Natural killer cell (primary cell): ENCODE measurements at regions of chr12 and their contacts with region 1.

Region 1: DNA sequence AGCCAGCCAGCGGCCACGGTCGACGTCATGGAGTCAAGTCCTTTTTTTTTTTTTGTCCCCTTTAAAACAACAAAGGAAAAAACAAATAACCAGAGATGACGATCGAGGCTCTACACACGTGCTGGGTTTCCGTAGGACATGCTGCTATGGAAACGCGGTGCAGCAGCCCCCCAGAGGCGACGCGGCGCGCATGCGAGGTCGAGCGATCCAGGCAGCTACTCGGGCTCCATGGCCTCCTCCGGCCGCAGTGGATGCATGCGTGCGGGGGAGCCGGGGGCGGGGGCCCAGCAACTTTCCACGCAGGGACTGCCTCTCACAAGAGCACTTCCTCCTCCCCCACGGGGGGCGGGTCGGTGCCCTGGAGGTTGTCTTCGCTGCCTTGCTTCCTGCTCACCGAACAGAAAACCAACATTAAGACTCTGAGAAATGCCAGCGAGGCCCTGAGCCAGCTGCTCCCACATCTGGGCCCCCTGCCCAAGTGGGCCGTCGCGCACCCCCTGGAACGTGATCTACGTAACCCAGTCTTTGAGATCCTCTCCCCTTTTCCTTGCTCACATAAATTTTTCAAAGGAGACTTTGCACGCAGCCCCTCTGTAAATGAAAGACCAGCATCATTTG is 30.7 kb downstream of the P2RX4 start:
- DNase-seq: peak; percentile 90 to 97
- ATAC-seq: peak; percentile 90 to 95 (median 92)
- H3K4me3 ChIP-seq: peak overlapping the region; percentile 32
- H3K4me3 Mint-ChIP-seq: peak overlapping the region; percentile 86
- H3K27ac ChIP-seq: peak overlapping the region; percentile 84
- H3K27ac Mint-ChIP-seq: peak overlapping the region; percentile 97 to 98
- H3K4me1 ChIP-seq: peaks cover 37% of the 10 kb centered on the region
- H3K4me1 Mint-ChIP-seq: peaks cover 29 to 30% of the 10 kb centered on the region in 2 donors
- H3K27me3 ChIP-seq: no peaks in the 10 kb centered on the region
- H3K27me3 Mint-ChIP-seq: no peaks in the 10 kb centered on the region
- CTCF ChIP-seq: no peak

Region 2: GRCh38 chr12:121128970-121129810 is 111.4 kb before region 1 on chr12:
- intact Hi-C with region 1: loop called (anchors 1 kb)
- DNase-seq: peak; percentile 75 to 89
- ATAC-seq: peak; percentile 80 to 90 (median 85)
- H3K4me3 ChIP-seq: peak overlapping the region; percentile 19
- H3K4me3 Mint-ChIP-seq: peak overlapping the region; percentile 92
- H3K27ac ChIP-seq: peak overlapping the region; percentile 91
- H3K27ac Mint-ChIP-seq: peak overlapping the region; percentile 97 to 98
- H3K4me1 ChIP-seq: peaks cover 47% of the 10 kb centered on the region
- H3K4me1 Mint-ChIP-seq: peaks cover 66 to 69% of the 10 kb centered on the region in 2 donors
- H3K27me3 ChIP-seq: no peaks in the 10 kb centered on the region
- H3K27me3 Mint-ChIP-seq: no peaks in the 10 kb centered on the region
- CTCF ChIP-seq: no peak

Region 3: DNA sequence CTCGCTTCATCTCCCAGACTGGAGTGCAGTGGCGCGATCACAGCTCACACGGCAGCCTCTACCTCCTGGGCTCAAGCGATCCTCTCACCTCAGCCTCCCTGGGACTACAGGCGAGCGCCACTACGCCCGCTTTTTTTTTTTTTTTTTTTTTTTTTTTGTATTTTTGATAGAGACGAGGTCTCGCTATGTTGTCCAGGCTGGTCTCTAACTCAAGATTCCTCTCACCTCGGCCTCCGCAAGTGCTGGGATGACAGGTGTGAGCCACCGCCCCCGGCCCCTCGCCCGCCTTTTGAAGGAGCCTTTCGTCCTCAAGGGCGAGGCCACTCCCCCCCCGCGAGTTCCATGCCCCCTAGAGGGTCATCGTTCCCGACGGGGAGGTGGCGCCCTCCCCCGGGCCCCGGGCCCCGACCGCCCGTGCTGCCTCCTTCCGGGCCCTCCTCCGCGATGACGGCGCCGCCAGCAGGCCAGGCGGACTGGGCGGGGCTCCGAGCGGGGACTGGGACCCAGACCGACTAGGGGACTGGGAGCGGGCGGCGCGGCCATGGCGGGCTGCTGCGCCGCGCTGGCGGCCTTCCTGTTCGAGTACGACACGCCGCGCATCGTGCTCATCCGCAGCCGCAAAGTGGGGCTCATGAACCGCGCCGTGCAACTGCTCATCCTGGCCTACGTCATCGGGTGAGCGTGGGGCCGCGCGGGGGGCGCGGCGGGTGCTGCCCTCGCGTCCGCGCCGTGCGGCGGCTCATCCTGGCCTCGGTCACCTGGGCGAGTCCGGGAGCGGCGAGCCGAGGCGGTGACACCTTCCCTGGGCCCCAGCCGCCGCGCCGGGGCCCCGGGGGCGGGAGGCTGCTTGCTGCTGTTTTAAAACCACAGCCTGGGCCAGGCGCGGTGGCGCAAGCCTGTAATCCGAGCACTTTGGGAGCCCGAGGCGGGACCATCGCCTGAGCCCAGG is 30.7 kb before region 1 on chr12 and contains the start of gene P2RX4:
- intact Hi-C with region 1: loop called (anchors 2 kb)
- DNase-seq: peak; percentile 83 to 95
- ATAC-seq: peak; percentile 71 to 87 (median 77)
- H3K4me3 ChIP-seq: peak within 1 kb of the TSS; percentile 92
- H3K4me3 Mint-ChIP-seq: peak within 1 kb of the TSS; percentile 84
- H3K27ac ChIP-seq: peak within 1 kb of the TSS; percentile 94
- H3K27ac Mint-ChIP-seq: peak within 1 kb of the TSS; percentile 90 to 96
- H3K4me1 ChIP-seq: peaks cover 25% of the 10 kb centered on the region
- H3K4me1 Mint-ChIP-seq: peaks cover 18 to 23% of the 10 kb centered on the region in 2 donors
- H3K27me3 ChIP-seq: no peaks in the 10 kb centered on the region
- H3K27me3 Mint-ChIP-seq: no peaks in the 10 kb centered on the region
- CTCF ChIP-seq: no peak
- total RNA-seq, gene P2RX4: 34.8 to 39.3 (median 38.2) TPM

Region 4: DNA sequence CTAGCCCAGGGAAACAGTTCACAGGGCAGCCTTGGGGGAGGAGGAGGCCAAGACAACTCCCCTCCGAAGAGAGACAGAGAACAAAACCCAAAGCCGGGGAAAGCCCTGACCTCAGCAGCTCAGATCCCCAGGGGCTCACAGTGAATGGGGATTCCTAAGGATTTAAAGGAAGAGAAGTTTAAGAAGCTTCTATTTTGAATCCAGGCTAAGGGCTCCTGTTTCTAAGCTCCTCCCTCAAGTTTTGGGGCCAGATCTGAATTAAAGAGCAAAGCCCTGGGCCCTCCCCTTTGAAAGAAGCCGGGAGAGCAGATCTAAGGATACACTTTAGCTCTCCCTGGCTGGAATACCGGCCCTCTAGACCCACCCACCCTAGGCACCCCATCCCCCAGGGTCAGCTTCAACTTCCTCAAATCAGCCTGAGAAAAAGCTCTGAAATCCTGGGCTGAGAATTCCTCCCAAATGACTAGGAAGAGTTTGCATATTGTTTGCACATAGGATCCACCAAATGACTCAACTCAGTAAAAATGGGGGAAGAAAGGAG is 336.3 kb after region 1 on chr12:
- intact Hi-C with region 1: no loop called
- DNase-seq: no peak
- ATAC-seq: no peak
- H3K4me3 ChIP-seq: no peak overlapping the region
- H3K4me3 Mint-ChIP-seq: peak overlapping the region; percentile 73
- H3K27ac ChIP-seq: no peak overlapping the region
- H3K27ac Mint-ChIP-seq: peak overlapping the region; percentile 60 to 78
- H3K4me1 ChIP-seq: peaks cover 34% of the 10 kb centered on the region
- H3K4me1 Mint-ChIP-seq: peaks cover 18 to 35% of the 10 kb centered on the region in 2 donors
- H3K27me3 ChIP-seq: no peaks in the 10 kb centered on the region
- H3K27me3 Mint-ChIP-seq: no peaks in the 10 kb centered on the region
- CTCF ChIP-seq: no peak